CD4-positive, alpha-beta T cell (primary cell): ENCODE measurements at regions of chr16 and their contacts with region 1.

Region 1: DNA sequence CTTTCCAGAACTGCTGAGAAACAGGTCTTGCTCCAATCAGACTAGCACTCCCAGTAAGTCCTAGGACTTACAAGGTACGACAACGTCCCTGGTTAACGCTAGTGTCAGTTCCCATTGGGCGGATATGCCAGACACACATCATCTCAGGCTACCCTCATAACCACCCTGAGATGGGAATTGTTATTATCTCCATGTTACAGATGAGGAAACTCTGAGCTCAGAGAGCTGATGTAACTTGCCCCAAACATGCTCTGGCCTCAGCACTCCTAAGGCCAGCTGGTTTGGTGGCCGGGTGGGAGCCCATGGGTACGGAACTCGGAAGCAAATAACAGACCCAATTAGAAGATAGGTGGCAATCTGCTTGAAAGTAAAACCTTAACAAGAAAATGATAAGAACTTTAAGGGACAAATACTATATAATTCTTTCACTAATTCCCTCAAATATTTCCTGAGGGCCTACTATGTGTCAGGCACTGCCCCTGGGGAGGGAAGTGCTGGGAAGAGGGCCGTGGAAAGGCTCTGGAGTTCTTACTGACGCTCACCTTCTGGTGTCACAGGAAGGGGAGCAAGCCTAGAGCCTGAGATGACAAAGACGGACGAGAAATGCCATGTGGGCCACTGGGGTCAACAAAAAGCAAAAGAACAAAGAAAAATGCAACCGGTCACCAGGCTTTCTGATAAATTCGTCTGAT is 6.9 kb downstream of the CREBBP start:
- DNase-seq: no peak
- ATAC-seq: no peak
- H3K4me3 ChIP-seq: no peak overlapping the region
- H3K4me3 Mint-ChIP-seq: peak overlapping the region; percentile 66
- H3K27ac ChIP-seq: no peak overlapping the region
- H3K27ac Mint-ChIP-seq: peak overlapping the region; percentile 25
- H3K4me1 ChIP-seq: peaks cover 73% of the 10 kb centered on the region
- H3K4me1 Mint-ChIP-seq: peaks cover 100% of the 10 kb centered on the region
- H3K27me3 ChIP-seq: no peaks in the 10 kb centered on the region
- H3K27me3 Mint-ChIP-seq: no peaks in the 10 kb centered on the region
- CTCF ChIP-seq: no peak

Region 2: GRCh38 chr16:3825103-3825502 is 48.5 kb before region 1 on chr16:
- CTCF ChIA-PET with region 1: no interaction called
- POLR2A ChIA-PET with region 1: no interaction called
- intact Hi-C with region 1: loop called in 1 of 2 experiments (anchors 5 kb)
- DNase-seq: no peak
- ATAC-seq: no peak
- H3K4me3 ChIP-seq: no peak overlapping the region
- H3K4me3 Mint-ChIP-seq: peak overlapping the region; percentile 32
- H3K27ac ChIP-seq: no peak overlapping the region
- H3K27ac Mint-ChIP-seq: no peak overlapping the region
- H3K4me1 ChIP-seq: peaks cover 67% of the 10 kb centered on the region
- H3K4me1 Mint-ChIP-seq: peaks cover 86% of the 10 kb centered on the region
- H3K27me3 ChIP-seq: no peaks in the 10 kb centered on the region
- H3K27me3 Mint-ChIP-seq: no peaks in the 10 kb centered on the region
- CTCF ChIP-seq: no peak

Region 3: DNA sequence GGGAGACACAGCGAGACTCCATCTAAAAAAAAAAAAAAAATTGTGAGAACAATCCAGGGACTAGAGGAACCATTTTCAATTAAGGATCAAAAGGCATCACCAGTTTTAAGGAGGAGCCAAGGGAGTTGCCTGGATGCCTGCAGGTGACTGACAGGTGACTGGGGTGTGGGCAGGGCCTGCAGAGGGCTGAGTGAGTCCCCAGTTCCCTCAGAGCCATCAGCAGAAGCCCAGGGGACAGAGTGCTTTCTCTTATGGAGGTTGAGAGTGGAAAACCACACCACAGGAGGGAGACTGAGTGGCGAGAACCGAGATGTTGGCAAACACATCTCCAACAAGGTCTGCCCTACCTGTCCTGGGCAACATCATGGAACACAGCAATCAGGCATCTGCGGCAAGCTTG is 34.0 kb after region 1 on chr16:
- CTCF ChIA-PET with region 1: no interaction called
- POLR2A ChIA-PET with region 1: no interaction called
- intact Hi-C with region 1: no loop called
- DNase-seq: no peak
- ATAC-seq: no peak
- H3K4me3 ChIP-seq: no peak overlapping the region
- H3K4me3 Mint-ChIP-seq: no peak overlapping the region
- H3K27ac ChIP-seq: no peak overlapping the region
- H3K27ac Mint-ChIP-seq: no peak overlapping the region
- H3K4me1 ChIP-seq: no peaks in the 10 kb centered on the region
- H3K4me1 Mint-ChIP-seq: no peaks in the 10 kb centered on the region
- H3K27me3 ChIP-seq: no peaks in the 10 kb centered on the region
- H3K27me3 Mint-ChIP-seq: no peaks in the 10 kb centered on the region
- CTCF ChIP-seq: no peak

Region 4: DNA sequence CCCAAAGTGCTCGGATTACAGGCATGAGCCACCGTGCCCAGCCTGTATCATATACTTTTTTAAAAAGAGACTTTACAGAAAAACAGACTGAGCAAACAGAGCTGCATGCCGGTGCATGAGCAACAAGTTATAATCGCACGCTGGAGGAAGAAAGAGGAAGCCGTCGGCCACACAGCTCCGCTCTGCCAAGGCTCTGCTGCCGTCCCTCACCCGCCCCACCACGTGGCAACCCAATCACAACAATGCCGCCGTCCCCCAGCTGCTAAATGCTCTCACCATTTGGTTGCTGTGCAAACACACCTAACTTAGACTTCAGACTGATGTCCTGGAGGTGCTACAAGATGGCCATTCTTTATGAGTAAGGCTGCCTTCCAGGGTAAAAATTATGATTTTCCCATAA is 159.1 kb after region 1 on chr16:
- CTCF ChIA-PET with region 1: no interaction called
- POLR2A ChIA-PET with region 1: no interaction called
- intact Hi-C with region 1: no loop called
- DNase-seq: peak in 4 of 14 experiments; percentile 10 to 51 (median 40)
- ATAC-seq: no peak
- H3K4me3 ChIP-seq: no peak overlapping the region
- H3K4me3 Mint-ChIP-seq: no peak overlapping the region
- H3K27ac ChIP-seq: no peak overlapping the region
- H3K27ac Mint-ChIP-seq: no peak overlapping the region
- H3K4me1 ChIP-seq: no peaks in the 10 kb centered on the region
- H3K4me1 Mint-ChIP-seq: peaks cover 19% of the 10 kb centered on the region
- H3K27me3 ChIP-seq: no peaks in the 10 kb centered on the region
- H3K27me3 Mint-ChIP-seq: no peaks in the 10 kb centered on the region
- CTCF ChIP-seq: no peak